Posterior cingulate gyrus (tissue), 11 donors: ENCODE measurements at regions of chr4 and their contacts with region 1.

Region 1: GRCh38 chr4:15396157-15396800 is 31.6 kb upstream of the C1QTNF7 start:
- DNase-seq: peak in 5 of 10 donors; percentile 13 to 80 (median 33)

Region 2: DNA sequence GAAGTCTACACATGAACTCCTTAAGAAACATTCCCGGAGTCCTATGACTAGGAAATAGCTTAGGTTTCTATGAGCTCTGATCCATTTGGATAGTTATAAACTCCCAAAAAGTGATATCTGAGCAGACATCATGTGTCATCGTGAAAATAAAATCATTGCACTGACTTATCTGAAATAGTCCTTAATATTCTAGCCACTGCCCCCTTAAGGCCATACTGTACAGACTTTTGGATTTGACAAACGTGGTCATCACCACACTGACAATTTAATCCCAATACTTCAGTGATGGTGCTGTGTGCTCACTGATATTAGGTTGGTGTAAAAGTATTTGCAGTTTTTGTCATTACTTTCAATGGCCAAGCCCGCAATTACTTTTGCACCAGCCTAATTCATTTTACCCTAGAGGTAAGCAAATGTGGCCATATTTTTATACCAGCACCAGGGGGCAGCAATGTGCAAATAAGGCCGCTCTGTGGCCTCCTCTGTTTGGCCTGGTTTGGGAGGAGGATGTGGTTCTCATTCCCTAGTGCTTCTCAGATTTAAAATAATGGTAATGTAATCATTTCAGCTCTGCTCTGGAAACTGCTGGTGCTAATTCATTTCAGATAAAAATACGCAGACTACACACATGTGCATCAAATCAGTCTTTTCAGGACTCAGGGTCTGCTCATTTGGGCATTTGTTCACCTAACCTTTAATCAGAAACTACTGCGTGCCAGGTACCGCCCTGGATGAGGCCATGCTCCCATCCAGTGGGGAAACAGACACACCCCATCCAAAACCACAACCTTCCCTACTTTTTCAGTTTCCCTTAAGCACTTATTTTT is 164.8 kb before region 1 on chr4:
- intact Hi-C with region 1: loop called (anchors 10 kb)
- DNase-seq: peak in 9 of 10 donors; percentile 14 to 93 (median 71)

Region 3: DNA sequence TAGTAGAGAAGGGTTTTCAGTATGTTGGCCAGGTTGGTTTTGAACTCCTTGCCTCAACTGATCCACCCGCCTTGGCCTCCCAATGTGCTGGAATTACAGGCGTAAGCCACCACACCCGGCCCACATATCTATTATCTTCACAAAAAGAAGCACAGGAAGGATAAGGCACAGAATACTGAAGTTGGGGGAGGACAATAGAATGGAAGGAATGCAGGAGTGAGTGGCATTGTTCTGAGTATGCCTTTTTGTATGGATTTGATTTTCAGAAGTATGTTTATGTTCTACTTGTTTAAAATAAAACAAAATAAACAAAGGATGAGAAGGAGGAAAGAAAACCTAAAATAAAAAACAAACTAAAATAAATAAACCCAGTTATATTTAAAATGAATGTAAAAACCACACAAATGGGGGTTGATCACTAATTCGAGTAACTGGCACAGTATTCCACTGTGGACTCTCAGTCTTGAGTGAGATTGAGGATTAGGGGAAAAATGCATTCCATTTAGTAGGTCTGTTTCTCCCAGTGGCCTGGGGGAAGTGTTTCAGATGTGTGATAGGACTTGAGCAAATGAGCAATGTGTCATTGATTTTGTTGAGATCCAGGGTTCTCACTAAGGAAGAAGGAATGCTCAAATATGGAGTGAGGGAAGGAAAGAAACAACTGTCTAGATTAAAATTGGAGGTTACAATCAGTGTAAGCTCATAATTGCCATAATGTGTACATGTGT is 77.5 kb before region 1 on chr4:
- intact Hi-C with region 1: no loop called
- DNase-seq: no peak

Region 4: DNA sequence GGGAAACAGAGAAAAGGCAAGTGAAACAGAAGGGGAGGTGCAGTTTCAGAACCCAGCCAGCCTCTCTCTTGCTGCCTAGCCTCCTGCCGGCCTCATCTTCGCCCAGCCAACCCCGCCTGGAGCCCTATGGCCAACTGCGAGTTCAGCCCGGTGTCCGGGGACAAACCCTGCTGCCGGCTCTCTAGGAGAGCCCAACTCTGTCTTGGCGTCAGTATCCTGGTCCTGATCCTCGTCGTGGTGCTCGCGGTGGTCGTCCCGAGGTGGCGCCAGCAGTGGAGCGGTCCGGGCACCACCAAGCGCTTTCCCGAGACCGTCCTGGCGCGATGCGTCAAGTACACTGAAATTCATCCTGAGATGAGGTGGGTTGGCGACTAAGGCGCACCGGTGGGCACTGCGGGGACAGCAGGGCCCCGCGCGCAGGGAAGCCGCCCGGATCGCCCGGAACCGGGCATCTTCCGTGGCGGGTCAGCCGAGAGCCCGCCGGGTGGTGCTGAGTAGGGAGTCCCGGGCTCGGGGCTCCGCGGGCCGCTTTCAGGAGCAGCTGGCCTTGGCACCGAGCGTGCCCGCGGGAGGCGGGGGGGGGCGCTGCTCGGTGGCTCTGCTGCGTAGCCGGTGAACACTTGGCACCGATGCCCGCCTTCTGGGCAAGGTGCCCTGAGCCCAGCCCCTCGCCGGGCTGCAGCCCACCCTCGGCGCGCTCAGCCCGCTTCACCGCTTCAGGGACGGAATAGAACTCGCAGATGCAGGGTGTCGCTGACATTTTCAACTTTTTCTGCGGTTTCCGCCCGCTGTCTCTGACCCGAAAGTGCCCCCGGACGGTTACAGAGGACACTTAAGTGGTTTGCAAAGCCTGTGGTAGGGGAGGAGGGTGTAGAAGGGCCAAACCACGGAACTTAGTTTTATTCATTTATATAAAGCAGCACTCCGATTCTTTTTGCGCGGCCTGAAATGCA is 382.3 kb after region 1 on chr4 and contains the start of gene CD38:
- intact Hi-C with region 1: no loop called
- DNase-seq: peak in 9 of 10 donors; percentile 10 to 88 (median 55)

Region 5: GRCh38 chr4:15893962-15894361 is 497.7 kb after region 1 on chr4:
- intact Hi-C with region 1: no loop called
- DNase-seq: no peak

Region 6: GRCh38 chr4:16196478-16197393 is 800.5 kb after region 1 on chr4:
- intact Hi-C with region 1: no loop called
- DNase-seq: no peak